GM10248 (cell line): ENCODE measurements at regions of chr19 and their contacts with region 1.

Region 1: GRCh38 chr19:56252699-56253422 is 19.7 kb upstream of the EDDM13 start:
- DNase-seq: peak; percentile 66
- CTCF ChIP-seq: peak; percentile 79

Region 2: GRCh38 chr19:56066152-56067023 is 186.5 kb before region 1 on chr19:
- CTCF ChIA-PET with region 1: interaction called, 63 read pairs
- POLR2A ChIA-PET with region 1: no interaction called
- DNase-seq: peak; percentile 84
- CTCF ChIP-seq: peak; percentile 93

Region 3: DNA sequence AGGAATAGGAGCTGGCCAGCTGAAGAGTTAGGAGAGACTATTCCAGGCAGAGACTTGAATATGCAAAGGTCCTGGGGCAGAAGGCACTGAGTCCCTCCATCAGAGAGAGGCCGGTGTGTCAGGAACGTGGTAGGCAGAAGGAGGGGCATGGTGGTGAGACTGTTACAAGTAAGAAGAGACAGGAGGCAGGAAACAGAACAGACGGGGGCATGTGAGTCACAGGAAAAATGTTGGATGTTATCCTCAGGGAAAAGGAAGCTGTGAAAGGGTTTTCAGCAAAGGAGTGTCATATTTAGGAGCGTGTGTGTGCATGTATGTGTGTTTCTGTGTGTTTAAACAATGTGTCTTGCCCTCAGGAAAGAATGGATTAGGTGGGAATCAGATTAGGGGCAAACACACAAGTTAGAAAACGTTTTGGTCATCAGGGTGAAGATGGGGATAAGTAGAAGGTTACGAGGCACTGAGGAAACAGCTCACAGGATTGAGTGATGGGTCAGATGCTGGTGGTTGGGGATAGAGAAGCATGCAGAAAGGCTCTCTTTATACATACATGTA is 20.8 kb after region 1 on chr19:
- CTCF ChIA-PET with region 1: interaction called, 28 read pairs
- POLR2A ChIA-PET with region 1: no interaction called
- DNase-seq: no peak
- CTCF ChIP-seq: no peak

Region 4: DNA sequence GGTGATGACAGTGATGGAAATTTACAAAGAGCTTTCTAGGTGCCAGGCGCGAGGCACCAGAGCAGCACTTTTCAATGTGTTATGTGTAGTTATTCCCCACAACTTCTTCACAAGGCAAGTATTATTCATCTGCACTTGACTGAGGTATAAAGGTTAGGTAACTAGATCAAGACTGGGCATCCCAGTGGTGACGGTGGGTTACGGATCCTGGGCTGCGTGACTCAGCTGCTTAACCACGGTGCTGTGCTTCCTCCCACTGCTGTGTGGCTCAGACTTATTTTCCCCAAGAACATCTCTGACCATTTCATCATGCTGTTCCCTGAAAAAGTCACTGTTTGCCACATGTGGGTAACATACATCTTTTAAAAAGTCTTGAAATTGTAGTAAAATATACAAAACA is 39.0 kb after region 1 on chr19:
- CTCF ChIA-PET with region 1: interaction called, 10 read pairs
- POLR2A ChIA-PET with region 1: no interaction called
- DNase-seq: no peak
- CTCF ChIP-seq: no peak

Region 5: GRCh38 chr19:56350416-56351045 is 97.7 kb after region 1 on chr19:
- CTCF ChIA-PET with region 1: interaction called, 24 read pairs
- POLR2A ChIA-PET with region 1: no interaction called
- DNase-seq: peak; percentile 37
- CTCF ChIP-seq: peak; percentile 82

Region 6: GRCh38 chr19:56367829-56368711 is 115.2 kb after region 1 on chr19:
- CTCF ChIA-PET with region 1: no interaction called
- POLR2A ChIA-PET with region 1: no interaction called
- DNase-seq: peak; percentile 65
- CTCF ChIP-seq: no peak

Region 7: GRCh38 chr19:56507446-56508289 is 254.8 kb after region 1 on chr19 and contains the start of gene ZNF471:
- CTCF ChIA-PET with region 1: no interaction called
- POLR2A ChIA-PET with region 1: no interaction called
- DNase-seq: no peak
- CTCF ChIP-seq: no peak